B cell (primary cell): ENCODE measurements at regions of chr11 and their contacts with region 1.

Region 1: DNA sequence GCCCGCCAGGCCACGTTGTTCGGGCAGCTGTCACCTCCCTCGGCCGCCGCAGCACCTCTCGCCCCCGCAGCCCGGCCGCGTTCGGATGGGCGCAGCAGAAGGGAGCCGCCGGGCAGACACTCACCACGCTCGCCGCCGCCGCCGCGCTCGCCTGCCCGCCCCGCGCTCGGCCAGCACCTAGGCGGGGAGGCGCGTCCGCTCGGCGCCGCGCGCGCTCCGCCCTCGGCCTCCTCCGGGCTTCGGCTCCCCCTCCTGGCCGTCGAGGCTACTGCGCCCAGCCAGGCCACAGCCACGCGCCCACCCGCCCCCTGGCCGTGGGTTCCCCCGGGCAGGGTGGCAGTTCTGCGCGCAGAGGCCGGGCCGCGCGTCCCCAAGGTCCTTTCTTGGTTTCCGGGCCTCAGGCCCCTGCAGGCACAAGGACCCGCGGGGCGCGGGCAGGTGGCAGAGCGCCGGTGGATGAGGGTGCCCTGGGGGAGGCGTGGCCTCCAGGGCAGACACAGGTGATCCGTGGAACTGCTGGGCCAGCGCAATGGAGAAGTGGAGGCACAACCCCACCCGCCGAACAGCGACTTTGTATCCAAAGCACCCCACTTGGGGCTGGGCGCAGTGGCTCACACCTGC is at the start of gene SLC25A22:
- DNase-seq: peak; percentile 94
- ATAC-seq: peak; percentile 78
- H3K4me3 ChIP-seq: peak within 1 kb of the TSS; percentile 19 to 95 (median 93)
- H3K4me3 Mint-ChIP-seq: peak within 1 kb of the TSS; percentile 95
- H3K27ac ChIP-seq: peak within 1 kb of the TSS; percentile 83 to 93
- H3K27ac Mint-ChIP-seq: peak within 1 kb of the TSS; percentile 92
- H3K4me1 ChIP-seq: peaks cover 17 to 35% of the 10 kb centered on the region in 2 donors
- H3K4me1 Mint-ChIP-seq: peaks cover 20% of the 10 kb centered on the region
- H3K27me3 ChIP-seq: no peaks in the 10 kb centered on the region
- H3K27me3 Mint-ChIP-seq: no peaks in the 10 kb centered on the region
- CTCF ChIP-seq: peak; percentile 85
- total RNA-seq, gene SLC25A22: 25.7 and 28.2 TPM in 2 replicates

Region 2: GRCh38 chr11:506238-506994 is 291.8 kb before region 1 on chr11:
- CTCF ChIA-PET with region 1: no interaction called
- POLR2A ChIA-PET with region 1: no interaction called
- intact Hi-C with region 1: loop called (anchors 2 kb)
- DNase-seq: peak; percentile 97
- ATAC-seq: peak; percentile 70
- H3K4me3 ChIP-seq: peak overlapping the region; percentile 38 to 100 (median 98)
- H3K4me3 Mint-ChIP-seq: peak overlapping the region; percentile 99
- H3K27ac ChIP-seq: peak overlapping the region; percentile 100
- H3K27ac Mint-ChIP-seq: peak overlapping the region; percentile 100
- H3K4me1 ChIP-seq: peaks cover 28 to 45% of the 10 kb centered on the region in 2 donors
- H3K4me1 Mint-ChIP-seq: peaks cover 38% of the 10 kb centered on the region
- H3K27me3 ChIP-seq: peaks cover 0 to 10% (median 0%) of the 10 kb centered on the region in 4 experiments
- H3K27me3 Mint-ChIP-seq: no peaks in the 10 kb centered on the region
- CTCF ChIP-seq: no peak

Region 3: DNA sequence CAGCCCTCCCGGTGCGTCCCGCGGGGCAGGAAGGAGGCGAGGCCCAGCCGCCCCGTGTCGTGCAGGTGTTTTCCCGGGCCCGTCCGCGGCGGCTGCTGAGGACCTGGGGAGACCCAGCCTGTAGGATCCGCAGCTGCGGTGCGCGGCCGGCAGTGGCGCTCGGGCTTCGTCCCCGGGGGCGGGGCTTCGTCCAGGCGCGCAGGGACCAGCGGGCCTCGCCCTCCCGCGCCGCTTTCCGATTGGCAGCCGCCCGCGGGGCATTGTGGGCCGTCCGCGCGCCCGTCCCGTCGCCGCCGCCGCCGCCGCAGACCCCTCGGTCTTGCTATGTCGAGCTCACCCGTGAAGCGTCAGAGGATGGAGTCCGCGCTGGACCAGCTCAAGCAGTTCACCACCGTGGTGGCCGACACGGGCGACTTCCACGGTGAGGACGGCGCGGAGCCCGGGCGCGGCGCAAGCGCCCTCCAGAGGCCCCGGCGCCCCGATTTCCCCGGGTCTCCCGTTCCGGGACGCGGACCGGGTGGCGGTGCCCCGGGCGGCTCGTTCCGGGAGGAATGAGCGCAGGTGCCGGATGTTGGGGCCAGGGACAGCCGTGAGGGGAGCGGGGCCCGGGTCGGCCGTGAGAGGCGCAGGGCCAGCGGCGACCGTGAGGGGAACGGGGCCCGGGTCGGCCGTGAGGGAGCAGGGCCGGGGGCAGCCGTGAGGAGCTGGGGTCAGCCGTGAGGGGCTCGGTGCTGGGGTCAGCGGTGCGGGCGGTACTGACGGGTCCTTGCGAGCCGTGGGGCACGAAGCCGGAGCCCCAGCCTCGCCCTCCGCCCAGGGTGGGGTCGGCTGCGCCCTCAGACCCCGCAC is 50.8 kb before region 1 on chr11 and contains the start of gene TALDO1:
- CTCF ChIA-PET with region 1: interaction called, 3 read pairs
- POLR2A ChIA-PET with region 1: no interaction called
- intact Hi-C with region 1: loop called (anchors 1 kb)
- DNase-seq: peak; percentile 90
- ATAC-seq: peak; percentile 97
- H3K4me3 ChIP-seq: peak within 1 kb of the TSS; percentile 56 to 88 (median 73)
- H3K4me3 Mint-ChIP-seq: peak within 1 kb of the TSS; percentile 88
- H3K27ac ChIP-seq: peak within 1 kb of the TSS; percentile 31 to 77
- H3K27ac Mint-ChIP-seq: peak within 1 kb of the TSS; percentile 83
- H3K4me1 ChIP-seq: peaks cover 17 to 27% of the 10 kb centered on the region in 2 donors
- H3K4me1 Mint-ChIP-seq: peaks cover 16% of the 10 kb centered on the region
- H3K27me3 ChIP-seq: no peaks in the 10 kb centered on the region
- H3K27me3 Mint-ChIP-seq: no peaks in the 10 kb centered on the region
- CTCF ChIP-seq: no peak
- total RNA-seq, gene TALDO1: 105 and 116 TPM in 2 replicates

Region 4: DNA sequence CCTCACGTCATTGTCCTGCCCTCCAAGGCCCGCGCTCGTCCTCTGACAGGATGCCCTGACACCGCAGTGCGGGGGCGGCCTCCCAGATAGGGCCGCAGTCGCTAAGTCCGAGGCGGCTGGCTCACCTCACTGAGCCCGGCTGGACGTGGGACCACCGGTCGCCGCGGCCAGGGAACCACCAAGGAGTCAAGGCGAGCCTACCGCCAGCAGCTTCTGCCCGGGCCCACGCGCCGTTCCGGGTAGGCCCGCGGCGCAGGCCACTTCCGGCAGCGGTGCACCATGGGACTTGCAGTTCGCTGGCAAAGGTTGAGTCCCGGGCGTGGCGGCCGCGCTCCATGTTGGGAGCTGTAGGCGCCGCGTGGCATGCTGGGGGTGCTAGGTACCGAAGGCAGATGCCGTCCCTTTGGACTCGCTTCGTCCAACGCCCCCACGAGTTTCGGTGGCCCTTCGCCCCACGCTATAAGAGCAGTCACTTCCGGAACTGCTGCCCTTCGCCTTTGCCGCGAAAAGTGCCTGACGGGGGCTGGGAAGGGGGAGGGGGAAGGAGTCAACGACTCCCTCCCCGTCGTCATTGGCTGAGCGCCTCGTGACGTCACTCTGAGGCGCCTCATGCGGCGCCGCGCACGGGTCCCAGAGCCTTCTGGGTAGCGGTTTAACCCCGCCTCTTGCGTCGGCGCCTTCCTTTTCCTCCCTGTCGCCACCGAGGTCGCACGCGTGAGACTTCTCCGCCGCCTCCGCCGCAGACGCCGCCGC is 11.3 kb after region 1 on chr11 and contains the start of gene RPLP2:
- CTCF ChIA-PET with region 1: interaction called, 5 read pairs
- POLR2A ChIA-PET with region 1: interaction called, 12 read pairs
- intact Hi-C with region 1: loop called (anchors 1 kb)
- DNase-seq: peak; percentile 100
- ATAC-seq: peak; percentile 82
- H3K4me3 ChIP-seq: peak within 1 kb of the TSS; percentile 53 to 95 (median 86)
- H3K4me3 Mint-ChIP-seq: peak within 1 kb of the TSS; percentile 96
- H3K27ac ChIP-seq: peak within 1 kb of the TSS; percentile 83 to 94
- H3K27ac Mint-ChIP-seq: peak within 1 kb of the TSS; percentile 99
- H3K4me1 ChIP-seq: peaks cover 23 to 35% of the 10 kb centered on the region in 2 donors
- H3K4me1 Mint-ChIP-seq: peaks cover 42% of the 10 kb centered on the region
- H3K27me3 ChIP-seq: no peaks in the 10 kb centered on the region
- H3K27me3 Mint-ChIP-seq: no peaks in the 10 kb centered on the region
- CTCF ChIP-seq: no peak
- total RNA-seq, gene RPLP2: 3,814 and 3,947 TPM in 2 replicates

Region 5: GRCh38 chr11:832321-833113 is 34.3 kb after region 1 on chr11 and contains the start of gene CD151:
- CTCF ChIA-PET with region 1: no interaction called
- POLR2A ChIA-PET with region 1: interaction called, 11 read pairs
- intact Hi-C with region 1: no loop called
- DNase-seq: peak; percentile 78
- ATAC-seq: peak; percentile 60
- H3K4me3 ChIP-seq: peak within 1 kb of the TSS in 4 of 5 experiments; percentile 31 to 58 (median 54)
- H3K4me3 Mint-ChIP-seq: peak within 1 kb of the TSS; percentile 71
- H3K27ac ChIP-seq: no peak within 1 kb of the TSS
- H3K27ac Mint-ChIP-seq: no peak within 1 kb of the TSS
- H3K4me1 ChIP-seq: peaks cover 57 to 65% of the 10 kb centered on the region in 2 donors
- H3K4me1 Mint-ChIP-seq: peaks cover 47% of the 10 kb centered on the region
- H3K27me3 ChIP-seq: peaks cover 0 to 63% (median 20%) of the 10 kb centered on the region in 4 experiments
- H3K27me3 Mint-ChIP-seq: peaks cover 7% of the 10 kb centered on the region
- CTCF ChIP-seq: no peak
- total RNA-seq, gene CD151: 24.3 and 25.5 TPM in 2 replicates

Region 6: GRCh38 chr11:859509-860131 is 61.4 kb after region 1 on chr11:
- CTCF ChIA-PET with region 1: no interaction called
- POLR2A ChIA-PET with region 1: no interaction called
- intact Hi-C with region 1: no loop called
- DNase-seq: no peak
- ATAC-seq: no peak
- H3K4me3 ChIP-seq: no peak overlapping the region
- H3K4me3 Mint-ChIP-seq: no peak overlapping the region
- H3K27ac ChIP-seq: no peak overlapping the region
- H3K27ac Mint-ChIP-seq: no peak overlapping the region
- H3K4me1 ChIP-seq: no peaks in the 10 kb centered on the region
- H3K4me1 Mint-ChIP-seq: no peaks in the 10 kb centered on the region
- H3K27me3 ChIP-seq: no peaks in the 10 kb centered on the region
- H3K27me3 Mint-ChIP-seq: no peaks in the 10 kb centered on the region
- CTCF ChIP-seq: no peak